ENCODE measurements at regions of chr20 and their contacts with region 1.

Region 1: GRCh38 chr20:5205348-5206210 is 78.8 kb downstream of the CDS2 start:
- DNase-seq: peak; percentile 63
- H3K4me3 ChIP-seq: no peak overlapping the region
- H3K27ac ChIP-seq: no peak overlapping the region
- H3K4me1 ChIP-seq: no peaks in the 10 kb centered on the region
- H3K27me3 ChIP-seq: no peaks in the 10 kb centered on the region
- CTCF ChIP-seq: peak; percentile 95 to 96

Region 2: DNA sequence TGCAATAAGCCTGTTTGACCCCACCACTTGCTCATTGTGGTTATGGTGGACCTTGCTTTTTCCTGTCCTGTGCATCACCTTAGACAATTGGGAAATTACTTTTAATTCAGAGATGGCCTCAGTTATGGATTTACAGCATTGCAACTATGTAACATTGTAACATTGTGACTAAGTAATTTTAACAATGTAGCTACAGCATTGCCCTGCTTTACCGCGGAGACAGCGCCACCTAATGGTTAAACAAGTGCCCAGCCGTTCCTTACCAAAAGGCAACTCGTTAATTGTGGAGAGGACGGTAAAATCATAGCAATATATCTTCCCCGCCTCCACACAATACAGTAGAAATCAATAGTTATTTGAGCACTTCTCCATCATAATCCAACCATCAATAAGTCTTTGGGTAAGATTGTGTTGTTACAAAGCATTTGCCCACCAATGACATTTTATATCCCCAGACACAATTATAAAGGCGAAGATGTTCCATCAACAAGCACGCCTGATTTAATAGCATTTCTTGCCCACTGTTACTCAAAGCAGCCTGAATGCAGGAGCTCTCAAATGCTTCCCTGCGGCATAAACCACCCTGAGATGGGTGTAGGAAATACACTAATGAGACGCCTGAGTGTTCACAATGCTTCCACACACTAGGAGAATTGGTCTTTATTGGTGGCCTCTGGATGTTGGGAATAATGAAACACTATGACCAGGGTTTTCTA is 17.5 kb after region 1 on chr20:
- CTCF ChIA-PET with region 1: interaction called, 3 read pairs
- dilution Hi-C with region 1: no loop called
- in situ Hi-C with region 1: no loop called
- intact Hi-C with region 1: loop called (anchors 1 kb)
- DNase-seq: peak; percentile 41
- H3K4me3 ChIP-seq: no peak overlapping the region
- H3K27ac ChIP-seq: no peak overlapping the region
- H3K4me1 ChIP-seq: no peaks in the 10 kb centered on the region
- H3K27me3 ChIP-seq: no peaks in the 10 kb centered on the region
- CTCF ChIP-seq: peak; percentile 89 to 98

Region 3: DNA sequence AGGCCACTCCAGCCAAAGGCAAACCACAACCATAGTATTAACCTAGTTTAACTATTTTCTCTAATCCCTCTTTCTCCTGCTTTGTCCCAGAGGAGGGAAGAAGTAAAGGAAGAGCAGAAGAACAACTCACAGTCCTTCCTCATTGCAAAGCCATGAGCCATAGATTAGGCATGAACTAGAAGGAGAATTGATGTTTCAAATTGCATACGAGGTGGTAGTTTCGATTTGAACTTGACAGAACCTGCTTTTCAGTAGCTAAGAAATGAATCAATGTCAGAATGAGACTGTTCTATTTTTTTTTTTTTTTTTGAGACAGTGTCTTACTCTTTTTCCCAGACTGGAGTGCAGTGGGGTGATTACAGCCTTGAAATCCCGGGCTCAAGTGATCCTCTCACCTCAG is 62.9 kb after region 1 on chr20:
- CTCF ChIA-PET with region 1: no interaction called
- dilution Hi-C with region 1: no loop called
- in situ Hi-C with region 1: no loop called
- intact Hi-C with region 1: no loop called
- DNase-seq: peak; percentile 63
- H3K4me3 ChIP-seq: no peak overlapping the region
- H3K27ac ChIP-seq: no peak overlapping the region
- H3K4me1 ChIP-seq: no peaks in the 10 kb centered on the region
- H3K27me3 ChIP-seq: peaks cover 2% of the 10 kb centered on the region
- CTCF ChIP-seq: no peak

Region 4: GRCh38 chr20:5448449-5449118 is 243.0 kb after region 1 on chr20:
- CTCF ChIA-PET with region 1: no interaction called
- dilution Hi-C with region 1: no loop called
- in situ Hi-C with region 1: loop called in 1 of 2 experiments (anchors 5 kb)
- intact Hi-C with region 1: loop called (anchors 1 kb)
- DNase-seq: peak; percentile 28
- H3K4me3 ChIP-seq: no peak overlapping the region
- H3K27ac ChIP-seq: no peak overlapping the region
- H3K4me1 ChIP-seq: no peaks in the 10 kb centered on the region
- H3K27me3 ChIP-seq: peaks cover 6% of the 10 kb centered on the region
- CTCF ChIP-seq: peak; percentile 67 to 68

Measured in mammary epithelial cell (primary cell).